B cell (primary cell): ENCODE measurements at regions of chr7 and their contacts with region 1.

Region 1: GRCh38 chr7:101990811-101991418 is 173.5 kb downstream of the CUX1 start:
- DNase-seq: peak; percentile 86
- ATAC-seq: peak; percentile 91
- H3K4me3 ChIP-seq: peak overlapping the region in 4 of 5 experiments; percentile 22 to 53 (median 36)
- H3K4me3 Mint-ChIP-seq: peak overlapping the region; percentile 67
- H3K27ac ChIP-seq: peak overlapping the region; percentile 68 to 77
- H3K27ac Mint-ChIP-seq: peak overlapping the region; percentile 72
- H3K4me1 ChIP-seq: peaks cover 41 to 81% of the 10 kb centered on the region in 2 donors
- H3K4me1 Mint-ChIP-seq: peaks cover 67% of the 10 kb centered on the region
- H3K27me3 ChIP-seq: no peaks in the 10 kb centered on the region
- H3K27me3 Mint-ChIP-seq: no peaks in the 10 kb centered on the region
- CTCF ChIP-seq: no peak

Region 2: GRCh38 chr7:101815835-101816493 is 175.0 kb before region 1 on chr7:
- CTCF ChIA-PET with region 1: no interaction called
- POLR2A ChIA-PET with region 1: no interaction called
- intact Hi-C with region 1: loop called (anchors 2 kb)
- DNase-seq: peak; percentile 87
- ATAC-seq: peak; percentile 73
- H3K4me3 ChIP-seq: peak overlapping the region; percentile 49 to 73 (median 61)
- H3K4me3 Mint-ChIP-seq: peak overlapping the region; percentile 88
- H3K27ac ChIP-seq: peak overlapping the region in 1 of 2 donors; percentile 18
- H3K27ac Mint-ChIP-seq: peak overlapping the region; percentile 89
- H3K4me1 ChIP-seq: peaks cover 7 to 16% of the 10 kb centered on the region in 2 donors
- H3K4me1 Mint-ChIP-seq: peaks cover 28% of the 10 kb centered on the region
- H3K27me3 ChIP-seq: no peaks in the 10 kb centered on the region
- H3K27me3 Mint-ChIP-seq: no peaks in the 10 kb centered on the region
- CTCF ChIP-seq: no peak

Region 3: DNA sequence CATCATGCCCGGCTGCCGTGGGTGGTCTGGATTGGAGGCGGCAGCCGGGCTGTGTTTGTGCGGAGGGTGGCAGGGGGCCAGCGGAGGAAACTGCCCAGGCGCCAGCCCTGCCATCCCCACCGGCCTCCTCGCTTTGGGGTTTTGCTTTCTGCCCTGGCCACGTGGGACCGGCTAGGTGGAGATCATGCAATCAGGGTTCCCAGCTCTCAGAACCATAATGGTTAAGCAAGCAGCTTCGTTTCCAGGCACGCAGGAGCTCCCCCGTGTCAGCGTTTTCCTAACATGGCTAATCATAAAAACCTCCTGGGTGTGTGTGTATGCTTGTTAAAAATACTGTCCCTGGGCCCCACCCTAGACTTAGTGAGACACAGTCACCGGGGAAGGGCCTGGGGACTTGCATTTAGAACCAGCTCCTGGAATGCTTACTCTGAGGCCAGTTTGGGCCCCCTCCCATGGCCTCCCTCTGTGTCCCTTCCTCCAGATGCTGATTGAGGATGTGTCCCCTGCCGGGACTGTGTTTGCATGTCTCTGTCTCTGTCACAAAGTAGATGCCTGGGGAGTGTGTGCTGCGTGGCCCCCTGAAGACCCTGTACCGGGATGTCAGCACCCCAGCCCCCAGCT is 54.2 kb before region 1 on chr7:
- CTCF ChIA-PET with region 1: no interaction called
- POLR2A ChIA-PET with region 1: no interaction called
- intact Hi-C with region 1: loop called (anchors 10 kb)
- DNase-seq: no peak
- ATAC-seq: no peak
- H3K4me3 ChIP-seq: no peak overlapping the region
- H3K4me3 Mint-ChIP-seq: no peak overlapping the region
- H3K27ac ChIP-seq: no peak overlapping the region
- H3K27ac Mint-ChIP-seq: no peak overlapping the region
- H3K4me1 ChIP-seq: peaks cover 19 to 34% of the 10 kb centered on the region in 2 donors
- H3K4me1 Mint-ChIP-seq: peaks cover 50% of the 10 kb centered on the region
- H3K27me3 ChIP-seq: no peaks in the 10 kb centered on the region
- H3K27me3 Mint-ChIP-seq: no peaks in the 10 kb centered on the region
- CTCF ChIP-seq: no peak

Region 4: DNA sequence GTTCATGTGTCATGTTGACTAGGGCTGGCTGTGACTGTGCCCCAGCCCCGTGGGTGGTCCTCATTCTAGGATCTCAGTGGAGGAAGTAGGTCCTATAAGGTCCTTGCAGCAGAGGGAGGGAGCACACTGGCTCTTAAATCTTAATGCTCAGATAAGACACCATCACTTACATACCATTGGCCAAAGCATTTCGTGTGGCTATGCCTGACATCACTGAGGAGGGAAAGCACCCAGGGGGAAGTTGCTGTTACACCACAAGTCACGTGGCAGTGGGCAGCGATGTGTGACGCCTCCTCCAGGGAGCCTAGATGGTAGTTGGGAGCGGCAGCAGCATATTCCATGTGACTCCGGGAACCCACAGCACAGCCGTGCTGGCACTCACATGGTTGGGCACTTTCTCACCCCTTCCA is 71.1 kb after region 1 on chr7:
- CTCF ChIA-PET with region 1: no interaction called
- POLR2A ChIA-PET with region 1: no interaction called
- intact Hi-C with region 1: loop called (anchors 5 kb)
- DNase-seq: peak; percentile 83
- ATAC-seq: peak; percentile 93
- H3K4me3 ChIP-seq: no peak overlapping the region
- H3K4me3 Mint-ChIP-seq: peak overlapping the region; percentile 48
- H3K27ac ChIP-seq: no peak overlapping the region
- H3K27ac Mint-ChIP-seq: peak overlapping the region; percentile 88
- H3K4me1 ChIP-seq: peaks cover 11 to 16% of the 10 kb centered on the region in 2 donors
- H3K4me1 Mint-ChIP-seq: peaks cover 30% of the 10 kb centered on the region
- H3K27me3 ChIP-seq: no peaks in the 10 kb centered on the region
- H3K27me3 Mint-ChIP-seq: no peaks in the 10 kb centered on the region
- CTCF ChIP-seq: no peak